A673 (cell line): ENCODE measurements at regions of chr1 and their contacts with region 1.

Region 1: DNA sequence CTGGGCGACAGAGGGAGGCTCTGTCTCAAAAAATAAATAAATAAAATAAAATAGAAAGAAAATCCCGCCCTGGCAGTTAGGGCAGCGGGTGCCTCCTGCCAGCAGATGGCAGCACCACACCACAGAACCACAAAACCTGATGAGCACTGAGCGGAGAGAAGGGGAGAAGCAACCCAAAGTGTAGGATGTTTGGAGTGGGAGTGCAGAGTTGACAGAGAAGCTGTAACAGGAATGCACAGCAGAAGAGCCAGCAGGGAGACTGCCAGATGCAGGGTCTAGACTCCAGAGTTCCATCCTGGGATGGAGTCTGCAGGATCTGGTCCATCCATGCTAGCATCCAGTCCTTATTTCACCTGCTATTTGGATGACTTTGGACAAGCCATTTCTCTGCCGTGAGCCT is 29.7 kb upstream of the KIRREL1 start:
- DNase-seq: peak; percentile 94
- H3K4me3 ChIP-seq: no peak overlapping the region
- H3K27ac ChIP-seq: peak overlapping the region; percentile 46
- H3K4me1 ChIP-seq: peaks cover 52% of the 10 kb centered on the region
- H3K27me3 ChIP-seq: no peaks in the 10 kb centered on the region
- CTCF ChIP-seq: peak; percentile 93

Region 2: DNA sequence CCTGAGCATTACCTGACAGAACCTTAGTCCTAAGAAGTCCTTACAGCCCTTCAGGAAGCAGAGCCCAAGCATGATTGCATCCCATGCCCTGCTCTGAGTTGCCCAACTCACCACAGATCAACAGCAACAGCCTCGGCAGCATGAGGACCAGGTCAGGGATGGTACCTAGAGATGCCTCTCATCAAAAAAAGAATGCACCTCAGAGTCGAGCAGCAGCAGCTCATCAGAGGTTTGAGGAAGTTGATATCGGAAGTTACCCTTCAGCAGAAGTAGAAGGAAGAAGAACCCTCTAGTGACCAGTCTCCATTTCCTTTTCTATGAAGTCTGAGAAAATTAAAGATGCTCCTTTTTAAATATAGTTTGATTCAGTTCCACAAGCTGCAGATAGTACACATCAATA is 143.8 kb before region 1 on chr1 and contains the start of gene FCRL1:
- CTCF ChIA-PET with region 1: no interaction called
- POLR2A ChIA-PET with region 1: no interaction called
- intact Hi-C with region 1: no loop called
- DNase-seq: no peak
- H3K4me3 ChIP-seq: no peak within 1 kb of the TSS
- H3K27ac ChIP-seq: no peak within 1 kb of the TSS
- H3K4me1 ChIP-seq: no peaks in the 10 kb centered on the region
- H3K27me3 ChIP-seq: peaks cover 45% of the 10 kb centered on the region
- CTCF ChIP-seq: no peak
- total RNA-seq, gene FCRL1: not detected in 2 replicates

Region 3: DNA sequence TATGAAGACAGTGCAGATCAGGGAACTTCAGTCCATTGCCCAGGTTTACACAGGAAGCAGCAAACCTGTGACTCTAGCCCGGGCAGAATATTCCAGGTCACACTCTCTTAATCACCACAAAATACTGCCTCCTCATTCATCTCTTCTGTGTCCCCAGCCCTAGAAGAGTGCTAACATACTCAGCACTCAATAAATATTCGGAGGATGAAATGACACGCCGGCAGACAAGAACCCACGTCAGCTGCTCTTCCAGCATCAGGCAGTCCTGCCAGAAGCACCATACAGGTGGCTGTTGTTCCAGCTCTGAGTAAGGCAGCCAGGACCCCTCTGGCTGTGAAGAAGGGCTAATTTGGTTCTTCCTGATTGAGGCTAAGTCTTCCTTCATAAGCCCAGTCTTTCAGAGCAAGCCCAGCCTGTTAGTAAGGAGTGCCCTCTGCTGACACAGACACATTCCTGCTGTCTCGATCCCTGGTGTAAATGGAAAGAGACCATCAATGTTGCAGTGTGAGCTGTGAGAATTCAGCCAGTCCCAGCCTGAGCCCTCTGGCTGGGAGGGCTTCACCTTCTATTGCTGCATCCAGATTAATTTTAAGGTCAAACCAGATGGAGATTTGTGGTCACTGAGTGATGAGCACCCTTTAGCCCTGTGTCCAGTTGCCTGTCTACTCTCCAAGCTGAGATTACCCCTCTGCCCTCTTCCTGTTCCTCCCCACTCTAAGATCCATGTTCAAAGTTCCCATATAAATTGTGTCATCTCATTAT is 15.2 kb before region 1 on chr1:
- CTCF ChIA-PET with region 1: no interaction called
- POLR2A ChIA-PET with region 1: no interaction called
- intact Hi-C with region 1: no loop called
- DNase-seq: peak; percentile 79
- H3K4me3 ChIP-seq: no peak overlapping the region
- H3K27ac ChIP-seq: no peak overlapping the region
- H3K4me1 ChIP-seq: no peaks in the 10 kb centered on the region
- H3K27me3 ChIP-seq: no peaks in the 10 kb centered on the region
- CTCF ChIP-seq: peak; percentile 73

Region 4: GRCh38 chr1:158329733-158330132 is 366.0 kb after region 1 on chr1:
- CTCF ChIA-PET with region 1: no interaction called
- POLR2A ChIA-PET with region 1: no interaction called
- intact Hi-C with region 1: loop called (anchors 10 kb)
- DNase-seq: peak; percentile 38
- H3K4me3 ChIP-seq: no peak overlapping the region
- H3K27ac ChIP-seq: no peak overlapping the region
- H3K4me1 ChIP-seq: no peaks in the 10 kb centered on the region
- H3K27me3 ChIP-seq: peaks cover 13% of the 10 kb centered on the region
- CTCF ChIP-seq: peak; percentile 56

Region 5: GRCh38 chr1:158496374-158496773 is 532.7 kb after region 1 on chr1:
- CTCF ChIA-PET with region 1: interaction called, 3 read pairs
- POLR2A ChIA-PET with region 1: no interaction called
- intact Hi-C with region 1: loop called (anchors 10 kb)
- DNase-seq: peak; percentile 42
- H3K4me3 ChIP-seq: no peak overlapping the region
- H3K27ac ChIP-seq: no peak overlapping the region
- H3K4me1 ChIP-seq: no peaks in the 10 kb centered on the region
- H3K27me3 ChIP-seq: peaks cover 51% of the 10 kb centered on the region
- CTCF ChIP-seq: peak; percentile 50

Region 6: DNA sequence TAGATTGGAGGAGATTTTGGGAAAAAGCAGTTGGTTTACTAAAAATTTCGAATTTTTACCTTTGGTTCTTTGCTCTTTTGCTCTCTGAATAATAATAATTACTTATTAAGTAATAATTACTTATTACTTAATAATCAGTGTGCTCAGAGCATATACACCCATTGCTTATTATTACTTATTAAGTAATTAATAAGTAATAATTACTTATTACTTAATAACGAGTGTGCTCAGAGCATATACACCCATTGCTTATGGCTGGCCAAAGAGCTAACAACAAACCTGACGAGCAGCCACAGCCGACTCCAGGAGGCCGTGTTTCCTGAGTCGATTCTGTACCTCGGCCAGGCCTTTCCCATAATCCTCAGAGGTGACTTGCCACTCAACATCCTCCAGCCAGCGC is 702.3 kb after region 1 on chr1:
- CTCF ChIA-PET with region 1: no interaction called
- POLR2A ChIA-PET with region 1: no interaction called
- intact Hi-C with region 1: no loop called
- DNase-seq: no peak
- H3K4me3 ChIP-seq: no peak overlapping the region
- H3K27ac ChIP-seq: no peak overlapping the region
- H3K4me1 ChIP-seq: no peaks in the 10 kb centered on the region
- H3K27me3 ChIP-seq: peaks cover 27% of the 10 kb centered on the region
- CTCF ChIP-seq: no peak